ENCODE measurements at regions of chr3 and their contacts with region 1.

Region 1: GRCh38 chr3:185824476-185825378 is at the start of gene IGF2BP2:
- DNase-seq: peak; percentile 73 to 96
- H3K4me3 ChIP-seq: peak within 1 kb of the TSS; percentile 99
- H3K27ac ChIP-seq: peak within 1 kb of the TSS; percentile 86
- H3K4me1 ChIP-seq: peaks cover 40% of the 10 kb centered on the region
- H3K27me3 ChIP-seq: no peaks in the 10 kb centered on the region
- CTCF ChIP-seq: no peak
- total RNA-seq, gene IGF2BP2: 140 and 150 TPM in 2 replicates

Region 2: DNA sequence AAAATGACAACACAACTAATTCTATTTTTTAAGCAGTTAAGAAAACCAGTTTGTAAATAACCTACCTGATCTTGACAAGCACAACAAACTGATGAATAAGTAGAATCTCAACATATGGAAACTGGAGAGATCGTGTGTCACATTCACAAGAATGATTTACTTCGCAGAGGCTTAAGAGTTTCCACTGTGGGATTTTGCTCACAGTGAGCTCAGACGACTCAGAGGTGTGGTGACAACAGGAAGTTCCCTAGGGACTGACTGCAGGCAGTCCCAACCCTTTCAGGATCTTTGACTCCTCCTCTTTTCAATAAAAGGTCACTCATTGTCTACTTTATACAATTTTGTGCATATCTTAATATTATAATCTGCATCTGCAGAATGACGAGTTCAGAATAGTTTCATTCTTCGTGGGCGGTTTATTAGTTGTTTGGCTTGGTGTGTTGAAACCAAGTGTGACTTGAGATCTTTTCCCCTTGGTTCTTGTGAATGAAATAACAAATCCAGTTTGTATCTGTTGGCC is 272.3 kb before region 1 on chr3 and contains the start of gene LIPH:
- CTCF ChIA-PET with region 1: no interaction called
- POLR2A ChIA-PET with region 1: interaction called, 29 read pairs
- intact Hi-C with region 1: no loop called
- DNase-seq: peak; percentile 61 to 96
- H3K4me3 ChIP-seq: peak within 1 kb of the TSS; percentile 61
- H3K27ac ChIP-seq: peak within 1 kb of the TSS; percentile 93
- H3K4me1 ChIP-seq: peaks cover 81% of the 10 kb centered on the region
- H3K27me3 ChIP-seq: no peaks in the 10 kb centered on the region
- CTCF ChIP-seq: no peak
- total RNA-seq, gene LIPH: 38.4 and 44.7 TPM in 2 replicates

Region 3: GRCh38 chr3:185724761-185725160 is 100.0 kb before region 1 on chr3:
- CTCF ChIA-PET with region 1: no interaction called
- POLR2A ChIA-PET with region 1: no interaction called
- intact Hi-C with region 1: no loop called
- DNase-seq: no peak
- H3K4me3 ChIP-seq: no peak overlapping the region
- H3K27ac ChIP-seq: no peak overlapping the region
- H3K4me1 ChIP-seq: peaks cover 33% of the 10 kb centered on the region
- H3K27me3 ChIP-seq: no peaks in the 10 kb centered on the region
- CTCF ChIP-seq: no peak

Region 4: GRCh38 chr3:185744997-185745843 is 79.5 kb before region 1 on chr3:
- CTCF ChIA-PET with region 1: no interaction called
- POLR2A ChIA-PET with region 1: no interaction called
- intact Hi-C with region 1: loop called (anchors 5 kb)
- DNase-seq: peak in 1 of 2 experiments; percentile 64
- H3K4me3 ChIP-seq: no peak overlapping the region
- H3K27ac ChIP-seq: no peak overlapping the region
- H3K4me1 ChIP-seq: peaks cover 8% of the 10 kb centered on the region; the same call in 1 of the 2 replicates
- H3K27me3 ChIP-seq: no peaks in the 10 kb centered on the region
- CTCF ChIP-seq: no peak

Region 5: GRCh38 chr3:185796431-185797107 is 28.2 kb before region 1 on chr3:
- CTCF ChIA-PET with region 1: interaction called, 4 read pairs
- POLR2A ChIA-PET with region 1: interaction called, 55 read pairs
- intact Hi-C with region 1: loop called (anchors 1 kb)
- DNase-seq: peak; percentile 86 to 100
- H3K4me3 ChIP-seq: 0 out of 2 replicates have a peak overlapping the region, but pooled peaks have one; percentile 10
- H3K27ac ChIP-seq: peak overlapping the region; percentile 93
- H3K4me1 ChIP-seq: peaks cover 63% of the 10 kb centered on the region
- H3K27me3 ChIP-seq: no peaks in the 10 kb centered on the region
- CTCF ChIP-seq: no peak

Region 6: DNA sequence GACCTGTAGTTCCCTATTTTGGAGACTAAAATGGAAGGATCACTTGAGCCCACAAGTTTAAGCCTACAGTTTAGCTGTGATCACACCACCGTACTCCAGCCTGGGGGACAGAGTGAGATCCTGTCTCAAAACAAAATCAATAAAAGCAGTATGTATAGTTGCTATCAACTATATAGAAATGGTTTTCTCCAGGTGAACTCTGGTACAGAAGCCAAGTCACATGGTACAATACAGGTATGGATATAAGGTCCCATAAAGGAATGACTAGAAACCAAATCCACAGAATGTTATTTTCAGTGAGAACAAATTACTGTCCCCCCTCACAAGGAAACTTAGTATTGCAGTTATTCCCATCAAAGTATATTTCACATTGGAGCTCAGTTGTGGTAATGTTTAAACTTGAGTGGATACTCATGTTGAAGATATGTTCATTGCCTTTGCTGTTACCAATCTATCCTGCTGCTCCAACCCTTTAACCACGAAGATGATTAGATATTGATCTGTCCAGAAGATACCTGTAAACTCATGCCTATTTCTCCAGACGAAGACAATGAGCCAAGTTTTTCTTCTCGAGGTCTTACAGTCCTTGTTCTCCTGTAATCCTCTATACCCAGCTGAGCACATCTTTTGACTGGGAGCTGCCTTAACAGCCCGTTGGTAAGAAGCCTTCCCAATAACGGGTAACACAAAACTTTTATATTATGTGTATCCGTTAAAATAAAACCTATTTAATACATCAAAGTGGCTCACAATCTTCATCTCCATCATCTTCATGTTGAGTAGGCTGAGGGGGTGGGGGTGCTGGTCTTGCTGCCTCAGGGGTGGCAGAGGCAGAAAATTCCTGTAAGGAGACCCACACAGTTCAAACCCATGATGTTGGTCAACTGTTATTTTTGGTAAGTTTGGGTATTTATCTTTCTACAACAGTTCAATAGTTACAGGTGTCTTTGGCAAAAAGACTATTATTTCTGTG is 88.5 kb after region 1 on chr3:
- CTCF ChIA-PET with region 1: no interaction called
- POLR2A ChIA-PET with region 1: no interaction called
- intact Hi-C with region 1: loop called (anchors 5 kb)
- DNase-seq: no peak
- H3K4me3 ChIP-seq: no peak overlapping the region
- H3K27ac ChIP-seq: 0 out of 2 replicates have a peak overlapping the region, but pooled peaks have one; percentile 15
- H3K4me1 ChIP-seq: no peaks in the 10 kb centered on the region
- H3K27me3 ChIP-seq: no peaks in the 10 kb centered on the region
- CTCF ChIP-seq: no peak

Region 7: GRCh38 chr3:185959609-185960517 is 135.1 kb after region 1 on chr3:
- CTCF ChIA-PET with region 1: no interaction called
- POLR2A ChIA-PET with region 1: interaction called, 13 read pairs
- intact Hi-C with region 1: no loop called
- DNase-seq: peak; percentile 74 to 91
- H3K4me3 ChIP-seq: peak overlapping the region; percentile 77
- H3K27ac ChIP-seq: peak overlapping the region; percentile 96
- H3K4me1 ChIP-seq: peaks cover 49% of the 10 kb centered on the region
- H3K27me3 ChIP-seq: no peaks in the 10 kb centered on the region
- CTCF ChIP-seq: peak; percentile 11; the same call in 1 of the 2 replicates

Region 8: DNA sequence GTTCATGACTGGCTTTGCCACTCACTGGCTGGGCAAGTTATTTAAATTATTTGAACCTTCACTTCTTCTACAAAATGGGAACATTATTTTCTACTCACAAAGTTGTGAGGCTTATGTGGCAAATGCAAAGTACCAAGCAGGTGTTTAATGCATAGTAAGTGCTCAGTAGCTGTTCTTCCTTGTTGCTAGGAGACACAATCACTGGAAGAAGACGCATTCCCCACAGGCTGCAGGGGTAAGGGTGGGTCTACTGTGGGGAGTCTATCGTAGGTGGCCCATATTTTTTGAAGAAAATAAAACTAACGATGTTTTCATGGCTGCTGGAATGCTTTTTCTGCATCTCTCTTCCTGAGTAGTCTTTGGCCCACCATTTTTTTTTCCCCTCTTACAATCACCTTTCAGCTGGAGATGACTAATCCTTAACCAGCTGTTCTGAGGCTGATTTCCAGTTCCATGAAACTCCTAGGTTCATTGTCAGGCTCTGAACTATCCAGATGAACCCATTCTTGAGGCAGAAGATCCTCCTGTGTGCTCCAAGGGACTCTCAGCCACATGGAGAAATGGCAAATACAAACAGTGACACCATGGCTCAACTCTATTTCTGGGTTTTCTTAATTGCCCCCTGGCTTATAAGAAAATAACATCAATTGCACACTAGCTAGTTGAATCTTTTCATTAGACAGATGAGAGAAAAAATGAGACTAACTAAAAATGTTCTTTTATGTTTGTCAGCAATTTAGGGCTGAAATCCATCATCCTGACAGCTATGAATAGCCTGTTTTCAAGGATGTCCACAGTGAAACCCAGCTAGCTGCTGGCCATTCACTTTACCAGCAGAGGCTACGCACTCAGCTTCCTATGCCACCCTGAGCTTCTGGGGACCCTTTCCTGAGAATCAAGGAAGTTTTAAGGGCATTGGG is 392.4 kb after region 1 on chr3:
- CTCF ChIA-PET with region 1: no interaction called
- POLR2A ChIA-PET with region 1: no interaction called
- intact Hi-C with region 1: no loop called
- DNase-seq: no peak
- H3K4me3 ChIP-seq: no peak overlapping the region
- H3K27ac ChIP-seq: no peak overlapping the region
- H3K4me1 ChIP-seq: 0 out of 2 replicates have a peak, but pooled peaks cover 3% of the 10 kb centered on the region
- H3K27me3 ChIP-seq: no peaks in the 10 kb centered on the region
- CTCF ChIP-seq: no peak